ENCODE measurements at regions of chr2 and their contacts with region 1.

Region 1: GRCh38 chr2:112920923-112921532 is 10.1 kb downstream of the IL37 start:
- DNase-seq: peak; percentile 38
- H3K4me3 Mint-ChIP-seq: no peak overlapping the region
- H3K27ac Mint-ChIP-seq: peak overlapping the region; percentile 88
- H3K4me1 Mint-ChIP-seq: peaks cover 35% of the 10 kb centered on the region
- H3K27me3 Mint-ChIP-seq: peaks cover 8% of the 10 kb centered on the region

Region 2: GRCh38 chr2:112706170-112706664 is 214.8 kb before region 1 on chr2:
- intact Hi-C with region 1: loop called (anchors 1 kb)
- DNase-seq: peak; percentile 79
- H3K4me3 Mint-ChIP-seq: peak overlapping the region; percentile 79
- H3K27ac Mint-ChIP-seq: peak overlapping the region; percentile 93
- H3K4me1 Mint-ChIP-seq: peaks cover 72% of the 10 kb centered on the region
- H3K27me3 Mint-ChIP-seq: no peaks in the 10 kb centered on the region

Region 3: GRCh38 chr2:112712903-112713584 is 208.0 kb before region 1 on chr2:
- intact Hi-C with region 1: loop called (anchors 1 kb)
- DNase-seq: no peak
- H3K4me3 Mint-ChIP-seq: peak overlapping the region; percentile 56
- H3K27ac Mint-ChIP-seq: peak overlapping the region; percentile 88
- H3K4me1 Mint-ChIP-seq: peaks cover 48% of the 10 kb centered on the region
- H3K27me3 Mint-ChIP-seq: peaks cover 10% of the 10 kb centered on the region

Region 4: GRCh38 chr2:112803691-112804521 is 117.1 kb before region 1 on chr2:
- intact Hi-C with region 1: loop called (anchors 5 kb)
- DNase-seq: no peak
- H3K4me3 Mint-ChIP-seq: no peak overlapping the region
- H3K27ac Mint-ChIP-seq: peak overlapping the region; percentile 93
- H3K4me1 Mint-ChIP-seq: peaks cover 36% of the 10 kb centered on the region
- H3K27me3 Mint-ChIP-seq: peaks cover 2% of the 10 kb centered on the region

Region 5: DNA sequence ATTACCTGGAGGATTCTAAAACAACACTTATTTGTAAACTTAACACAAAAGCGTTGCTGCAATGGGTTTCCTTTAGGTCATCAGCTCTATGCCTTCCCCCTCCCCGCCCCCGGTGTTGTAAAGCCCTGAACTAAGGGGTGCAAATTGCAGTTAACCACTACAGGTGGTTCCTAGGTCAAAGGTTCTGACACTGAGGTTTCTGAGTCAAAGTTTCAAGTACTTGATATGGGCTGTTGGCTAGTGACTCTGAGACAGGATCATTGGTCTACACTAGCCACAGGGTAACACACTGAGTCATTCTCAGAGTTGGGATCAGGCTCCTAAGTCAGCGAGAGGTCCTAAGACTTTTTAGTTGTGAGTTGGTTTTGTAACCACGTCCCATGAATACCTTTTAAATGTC is 99.9 kb before region 1 on chr2:
- intact Hi-C with region 1: loop called (anchors 1 kb)
- DNase-seq: peak; percentile 38
- H3K4me3 Mint-ChIP-seq: peak overlapping the region; percentile 32
- H3K27ac Mint-ChIP-seq: peak overlapping the region; percentile 79
- H3K4me1 Mint-ChIP-seq: peaks cover 39% of the 10 kb centered on the region
- H3K27me3 Mint-ChIP-seq: peaks cover 3% of the 10 kb centered on the region

Region 6: DNA sequence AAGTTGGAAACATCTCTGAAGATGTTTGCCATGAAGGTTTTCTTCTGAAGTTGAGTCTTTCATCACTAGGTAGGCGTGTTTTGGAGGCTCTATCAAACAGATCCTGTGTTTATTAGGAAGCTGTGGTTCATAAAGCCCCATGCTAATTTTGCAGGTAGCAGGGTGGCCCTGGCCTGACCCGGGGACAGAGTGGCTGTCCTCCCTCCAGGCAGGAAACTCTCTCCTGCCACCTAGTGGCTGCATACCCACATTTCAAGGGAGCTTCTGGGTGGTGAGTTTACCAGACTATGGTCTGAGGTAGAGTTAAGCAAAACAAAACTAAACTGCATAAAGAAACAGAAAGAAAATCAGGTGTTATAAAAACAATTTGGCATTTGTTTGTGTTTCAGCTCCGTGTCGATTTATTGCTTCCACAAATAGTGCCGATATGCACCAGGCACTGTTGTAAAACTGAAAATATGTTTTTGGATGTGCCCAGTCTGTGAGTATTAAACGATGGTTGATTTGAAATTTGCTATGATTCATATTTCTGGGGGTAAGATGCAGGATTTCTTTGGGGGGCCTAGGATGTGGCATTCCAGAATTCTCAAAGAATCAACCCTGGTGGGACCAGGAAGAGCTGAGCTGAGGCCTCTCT is 36.0 kb before region 1 on chr2:
- intact Hi-C with region 1: loop called (anchors 1 kb)
- DNase-seq: peak; percentile 64
- H3K4me3 Mint-ChIP-seq: no peak overlapping the region
- H3K27ac Mint-ChIP-seq: peak overlapping the region; percentile 47
- H3K4me1 Mint-ChIP-seq: peaks cover 31% of the 10 kb centered on the region
- H3K27me3 Mint-ChIP-seq: peaks cover 11% of the 10 kb centered on the region

Region 7: DNA sequence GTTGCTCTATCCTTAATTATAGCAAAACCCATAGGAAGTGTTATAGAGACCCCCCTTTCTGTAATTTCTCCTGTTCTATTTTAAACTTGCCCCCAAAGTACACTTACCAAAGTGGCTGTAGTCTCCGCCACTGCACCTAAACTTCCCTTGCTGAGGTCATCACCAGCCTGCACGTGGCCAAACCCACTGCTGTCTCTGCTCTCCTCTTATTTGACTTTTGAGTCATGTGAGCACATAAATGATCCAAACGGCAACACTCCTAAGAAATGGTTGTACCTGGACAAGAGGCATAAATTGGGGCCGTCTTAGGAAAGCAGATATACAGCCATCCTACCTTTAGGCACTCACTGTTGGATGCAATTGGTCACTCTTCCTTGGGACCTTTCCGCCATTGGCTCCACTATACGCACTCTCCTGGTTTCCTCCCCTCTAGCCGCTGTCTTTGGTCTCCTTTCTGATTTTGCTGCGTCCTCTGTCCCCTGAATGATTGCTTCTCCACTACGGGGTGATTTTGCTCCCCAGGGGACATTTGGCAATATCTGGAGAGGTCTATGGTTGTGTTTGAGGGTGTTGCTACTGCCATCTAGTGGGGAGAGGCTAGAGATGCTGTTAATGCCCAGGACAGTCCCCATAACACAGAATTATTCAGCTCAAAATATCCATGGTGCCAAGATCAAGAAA is 37.5 kb after region 1 on chr2:
- intact Hi-C with region 1: loop called (anchors 2 kb)
- DNase-seq: peak; percentile 24
- H3K4me3 Mint-ChIP-seq: no peak overlapping the region
- H3K27ac Mint-ChIP-seq: no peak overlapping the region
- H3K4me1 Mint-ChIP-seq: no peaks in the 10 kb centered on the region
- H3K27me3 Mint-ChIP-seq: peaks cover 7% of the 10 kb centered on the region

Region 8: GRCh38 chr2:112985090-112985489 is 64.1 kb after region 1 on chr2:
- intact Hi-C with region 1: no loop called
- DNase-seq: peak; percentile 41
- H3K4me3 Mint-ChIP-seq: no peak overlapping the region
- H3K27ac Mint-ChIP-seq: no peak overlapping the region
- H3K4me1 Mint-ChIP-seq: peaks cover 27% of the 10 kb centered on the region
- H3K27me3 Mint-ChIP-seq: no peaks in the 10 kb centered on the region

Region 9: GRCh38 chr2:113032737-113033136 is 111.7 kb after region 1 on chr2:
- intact Hi-C with region 1: no loop called
- DNase-seq: no peak
- H3K4me3 Mint-ChIP-seq: no peak overlapping the region
- H3K27ac Mint-ChIP-seq: no peak overlapping the region
- H3K4me1 Mint-ChIP-seq: no peaks in the 10 kb centered on the region
- H3K27me3 Mint-ChIP-seq: peaks cover 26% of the 10 kb centered on the region

Measured in activated T-helper 1 cell treated with anti-CD3 and anti-CD28 coated beads, Interleukin-12 subunit alpha, Interleukin-12 subunit beta, Interleukin-2, Interleukin-4 antibody, amounts not matched to agents 30 ng/mL and 10 ng/mL and 1 ng/mL, durations not matched to agents 14 hours and 24 hours and 36 hours (primary cell).